ENCODE measurements at regions of chr7 and their contacts with region 1.

Region 1: DNA sequence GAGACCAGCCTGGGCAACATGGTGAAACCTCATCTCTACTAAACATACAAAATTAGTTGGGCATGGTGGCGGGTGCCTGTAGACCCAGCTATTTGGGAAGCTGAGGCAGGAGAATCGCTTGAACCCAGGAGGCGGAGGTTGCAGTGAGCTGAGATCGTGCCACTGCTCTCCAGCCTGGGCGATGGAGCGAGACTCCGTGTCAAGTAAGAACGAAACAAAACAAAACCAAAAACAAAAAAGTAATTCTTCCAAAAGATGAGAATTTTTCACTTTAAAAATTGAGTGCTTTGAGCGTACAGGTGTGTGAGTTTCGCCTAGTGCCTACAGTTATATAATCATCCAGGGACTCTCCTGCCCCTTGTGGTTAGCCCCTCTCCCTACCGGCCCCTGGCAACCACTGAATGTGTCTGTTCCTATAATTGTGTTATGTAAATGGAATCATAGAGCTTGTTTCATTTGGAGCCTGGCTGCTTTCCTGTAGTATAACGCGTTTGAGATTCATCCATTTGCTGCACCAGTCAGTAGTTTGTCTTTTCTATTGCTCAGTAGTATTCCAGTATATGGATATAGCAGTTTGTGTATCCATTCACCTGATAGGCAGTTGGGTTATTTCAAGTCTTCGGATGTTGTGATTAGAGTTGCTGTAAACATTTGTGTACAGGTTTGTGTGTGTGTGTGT is 80.0 kb downstream of the RBM33 start:
- DNase-seq: peak; percentile 75
- H3K4me3 ChIP-seq: peak overlapping the region; percentile 59
- H3K27ac ChIP-seq: peak overlapping the region; percentile 96
- H3K4me1 ChIP-seq: peaks cover 90% of the 10 kb centered on the region
- CTCF ChIP-seq: peak; percentile 73

Region 2: DNA sequence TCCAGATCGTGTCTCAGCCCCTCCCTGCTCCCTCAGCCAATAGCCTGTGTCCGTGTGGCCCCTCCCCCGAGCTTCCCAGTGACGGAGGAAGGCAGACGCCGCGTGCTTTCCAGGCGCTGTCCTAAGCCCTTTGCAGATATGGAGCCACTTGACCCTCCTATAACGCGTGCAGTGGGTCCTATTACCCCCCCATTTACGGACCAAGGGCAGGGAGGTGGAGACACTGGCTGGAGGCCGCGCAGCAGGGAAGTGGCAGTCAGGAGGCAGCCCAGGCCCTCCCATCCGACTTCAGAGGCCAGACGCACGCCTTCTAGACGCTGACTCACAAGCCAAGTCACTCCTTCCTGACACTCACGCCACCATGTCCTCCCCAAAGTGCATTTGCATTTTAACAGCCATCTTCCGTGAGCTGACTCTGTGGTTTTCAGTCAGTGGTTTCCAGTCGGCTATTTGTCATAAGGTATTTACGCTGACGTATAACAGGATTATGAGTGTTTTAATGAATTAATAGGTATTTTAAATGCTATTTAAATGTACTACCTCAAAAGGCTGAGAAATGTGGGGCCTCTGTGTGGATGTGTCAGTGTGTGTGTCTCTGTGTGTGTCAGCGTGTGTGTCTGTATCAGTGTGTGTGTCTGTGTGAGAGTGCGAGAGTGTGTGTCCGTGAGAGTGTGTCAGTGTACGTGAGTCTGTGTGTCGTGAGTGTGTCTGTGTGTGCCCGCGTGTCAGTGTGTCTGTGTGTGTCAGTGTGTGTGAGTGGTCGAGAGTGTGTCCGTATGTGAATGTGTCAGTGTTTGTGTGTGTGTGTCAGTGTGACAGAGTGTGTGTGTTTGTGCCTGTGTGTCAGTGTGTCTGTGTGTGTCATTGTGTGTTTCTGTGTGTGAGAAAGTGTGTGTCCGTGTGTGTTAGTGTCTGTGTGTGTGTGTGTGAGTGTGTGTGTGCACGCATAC is 518.8 kb before region 1 on chr7:
- CTCF ChIA-PET with region 1: no interaction called
- POLR2A ChIA-PET with region 1: no interaction called
- intact Hi-C with region 1: loop called (anchors 5 kb)
- DNase-seq: peak; percentile 93
- H3K4me3 ChIP-seq: peak overlapping the region; percentile 69
- H3K27ac ChIP-seq: peak overlapping the region; percentile 92
- H3K4me1 ChIP-seq: peaks cover 51% of the 10 kb centered on the region
- CTCF ChIP-seq: no peak

Region 3: GRCh38 chr7:155644178-155644970 is 80.1 kb before region 1 on chr7 and contains the start of gene RBM33:
- CTCF ChIA-PET with region 1: no interaction called
- POLR2A ChIA-PET with region 1: interaction called, 8 read pairs
- intact Hi-C with region 1: loop called (anchors 2 kb)
- DNase-seq: peak; percentile 85
- H3K4me3 ChIP-seq: peak within 1 kb of the TSS; percentile 94
- H3K27ac ChIP-seq: peak within 1 kb of the TSS; percentile 86
- H3K4me1 ChIP-seq: peaks cover 31% of the 10 kb centered on the region
- CTCF ChIP-seq: no peak
- total RNA-seq, gene RBM33: 67.6 and 79.2 TPM in 2 replicates

Region 4: DNA sequence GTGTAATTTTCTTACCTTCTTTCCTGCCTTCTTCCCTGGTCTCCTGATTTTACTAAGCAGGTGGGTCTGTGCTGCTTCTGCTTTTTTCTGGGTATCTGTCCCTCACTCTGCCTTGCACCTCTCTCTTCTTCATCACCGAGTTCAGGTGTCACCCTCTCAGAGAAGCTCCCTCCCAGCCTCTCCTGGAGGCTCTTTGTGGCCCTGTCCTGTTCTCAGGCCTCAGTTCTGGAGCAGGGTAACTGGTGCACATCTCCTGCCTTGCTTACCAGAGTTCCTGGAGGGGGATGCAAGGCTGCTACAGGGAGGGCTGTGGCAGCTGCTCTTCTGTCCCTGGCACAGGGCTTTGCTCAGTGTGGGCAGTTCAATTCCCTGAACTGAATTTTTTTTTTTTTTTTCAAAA is 13.9 kb before region 1 on chr7:
- CTCF ChIA-PET with region 1: no interaction called
- POLR2A ChIA-PET with region 1: interaction called, 37 read pairs
- intact Hi-C with region 1: loop called (anchors 1 kb)
- DNase-seq: peak; percentile 90
- H3K4me3 ChIP-seq: peak overlapping the region; percentile 43
- H3K27ac ChIP-seq: peak overlapping the region; percentile 88
- H3K4me1 ChIP-seq: peaks cover 64% of the 10 kb centered on the region
- CTCF ChIP-seq: no peak

Measured in OCI-LY7 (cell line).